ENCODE measurements at regions of chr7 and their contacts with region 1.

Region 1: GRCh38 chr7:117895276-117895675 is 22.0 kb upstream of the CTTNBP2 start:
- DNase-seq: no peak
- H3K4me3 ChIP-seq: no peak overlapping the region
- H3K27ac ChIP-seq: no peak overlapping the region
- H3K4me1 ChIP-seq: no peaks in the 10 kb centered on the region
- H3K27me3 ChIP-seq: no peaks in the 10 kb centered on the region
- CTCF ChIP-seq: no peak
- POLR2A ChIP-seq: no peak

Region 2: DNA sequence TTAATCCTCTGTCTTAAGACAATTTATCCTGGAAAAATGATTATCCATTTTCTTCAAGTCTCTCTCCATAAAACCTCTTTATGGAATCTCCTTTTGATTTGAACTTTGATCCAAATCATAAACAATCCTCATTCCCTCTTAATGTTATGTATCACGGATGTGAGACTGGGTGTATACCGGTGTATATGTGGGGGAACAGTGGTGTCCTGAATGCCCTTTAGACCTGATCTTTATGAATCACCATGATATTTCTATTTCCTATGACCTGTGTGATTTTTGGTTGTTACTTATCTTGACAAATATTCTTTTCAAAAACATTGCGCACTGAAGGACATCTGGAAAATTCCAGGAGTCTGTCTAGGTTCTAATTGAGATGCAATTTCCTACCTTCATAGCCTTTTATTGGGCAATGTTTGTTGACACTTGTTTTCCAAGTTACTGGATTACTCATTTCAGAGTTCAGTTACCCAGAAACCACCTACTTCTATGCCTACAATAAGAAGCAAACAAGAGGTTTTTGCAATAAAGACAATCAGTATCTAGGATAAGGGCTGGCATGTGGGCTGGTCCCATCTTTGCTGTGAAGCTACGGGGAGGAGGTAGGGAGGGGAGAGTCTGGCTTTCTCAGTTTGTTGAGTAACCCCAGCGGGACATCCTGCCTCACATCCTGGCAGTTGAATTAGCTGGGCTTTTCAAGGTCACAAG is 212.4 kb before region 1 on chr7:
- CTCF ChIA-PET with region 1: no interaction called
- POLR2A ChIA-PET with region 1: no interaction called
- dilution Hi-C with region 1: no loop called
- intact Hi-C with region 1: no loop called
- DNase-seq: no peak
- H3K4me3 ChIP-seq: no peak overlapping the region
- H3K27ac ChIP-seq: no peak overlapping the region
- H3K4me1 ChIP-seq: no peaks in the 10 kb centered on the region
- H3K27me3 ChIP-seq: peaks cover 10 to 29% of the 10 kb centered on the region in 2 experiments
- CTCF ChIP-seq: no peak
- POLR2A ChIP-seq: no peak

Region 3: GRCh38 chr7:117873310-117874190 is 21.7 kb before region 1 on chr7 and contains the start of gene CTTNBP2:
- CTCF ChIA-PET with region 1: no interaction called
- POLR2A ChIA-PET with region 1: no interaction called
- dilution Hi-C with region 1: no loop called
- intact Hi-C with region 1: loop called (anchors 1 kb)
- DNase-seq: peak; percentile 44
- H3K4me3 ChIP-seq: peak within 1 kb of the TSS; percentile 42 to 58 (median 50)
- H3K27ac ChIP-seq: no peak within 1 kb of the TSS
- H3K4me1 ChIP-seq: peaks cover 12% of the 10 kb centered on the region
- H3K27me3 ChIP-seq: peaks cover 35 to 40% of the 10 kb centered on the region in 2 experiments
- CTCF ChIP-seq: no peak
- POLR2A ChIP-seq: no peak
- total RNA-seq, gene CTTNBP2: 0.25 and 0.35 TPM in 2 replicates

Region 4: GRCh38 chr7:117907049-117907640 is 11.9 kb after region 1 on chr7:
- CTCF ChIA-PET with region 1: no interaction called
- POLR2A ChIA-PET with region 1: no interaction called
- dilution Hi-C with region 1: no loop called
- intact Hi-C with region 1: no loop called
- DNase-seq: no peak
- H3K4me3 ChIP-seq: no peak overlapping the region
- H3K27ac ChIP-seq: no peak overlapping the region
- H3K4me1 ChIP-seq: no peaks in the 10 kb centered on the region
- H3K27me3 ChIP-seq: no peaks in the 10 kb centered on the region
- CTCF ChIP-seq: no peak
- POLR2A ChIP-seq: no peak

Region 5: GRCh38 chr7:117929237-117929636 is 34.0 kb after region 1 on chr7:
- CTCF ChIA-PET with region 1: no interaction called
- POLR2A ChIA-PET with region 1: no interaction called
- dilution Hi-C with region 1: no loop called
- intact Hi-C with region 1: no loop called
- DNase-seq: no peak
- H3K4me3 ChIP-seq: no peak overlapping the region
- H3K27ac ChIP-seq: no peak overlapping the region
- H3K4me1 ChIP-seq: no peaks in the 10 kb centered on the region
- H3K27me3 ChIP-seq: no peaks in the 10 kb centered on the region
- CTCF ChIP-seq: no peak
- POLR2A ChIP-seq: no peak

Region 6: GRCh38 chr7:117982071-117983055 is 87.1 kb after region 1 on chr7:
- CTCF ChIA-PET with region 1: no interaction called
- POLR2A ChIA-PET with region 1: no interaction called
- dilution Hi-C with region 1: no loop called
- intact Hi-C with region 1: no loop called
- DNase-seq: peak; percentile 76
- H3K4me3 ChIP-seq: no peak overlapping the region
- H3K27ac ChIP-seq: no peak overlapping the region
- H3K4me1 ChIP-seq: peaks cover 2% of the 10 kb centered on the region
- H3K27me3 ChIP-seq: no peaks in the 10 kb centered on the region
- CTCF ChIP-seq: no peak
- POLR2A ChIP-seq: no peak